Right ventricle myocardium inferior (tissue), 1 donor: ENCODE measurements at regions of chr16 and their contacts with region 1.

Region 1: GRCh38 chr16:15643048-15643945 is at the start of gene MARF1:
- DNase-seq: peak; percentile 100
- ATAC-seq: peak; percentile 98
- total RNA-seq, gene MARF1: 48.4 TPM

Region 2: DNA sequence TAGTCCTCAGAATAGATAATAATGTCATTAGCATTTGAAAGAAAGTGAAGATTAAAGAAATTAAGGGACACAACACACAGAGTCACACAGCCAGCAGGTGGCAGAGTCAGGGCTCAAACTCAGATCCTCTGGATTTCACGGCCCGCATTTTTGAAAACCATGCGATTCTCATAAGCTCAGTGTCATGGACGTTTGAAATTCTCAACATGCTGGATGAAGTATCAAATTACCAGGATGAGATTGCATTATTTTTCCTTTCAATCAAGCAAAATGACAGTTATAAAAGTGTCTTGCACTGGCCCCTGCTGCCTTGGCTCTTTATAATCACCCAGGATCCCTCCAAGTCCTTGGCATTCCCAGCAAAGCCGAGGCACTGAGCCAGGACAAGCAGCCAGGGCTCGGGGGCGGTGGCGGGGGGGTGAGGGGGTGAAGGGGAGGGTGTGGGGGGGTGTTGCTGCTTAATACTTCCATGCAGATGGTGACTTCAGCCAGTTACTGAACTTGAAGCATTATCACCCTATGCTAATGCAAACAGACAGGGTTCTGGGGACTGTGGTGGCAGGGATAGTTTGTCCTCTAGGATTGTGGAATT is 215.6 kb before region 1 on chr16:
- intact Hi-C with region 1: loop called (anchors 5 kb)
- DNase-seq: peak; percentile 83
- ATAC-seq: peak; percentile 86

Region 3: GRCh38 chr16:15607700-15608396 is 35.4 kb before region 1 on chr16:
- intact Hi-C with region 1: loop called (anchors 2 kb)
- DNase-seq: peak; percentile 78
- ATAC-seq: peak; percentile 98

Region 4: GRCh38 chr16:15672514-15673167 is 29.3 kb after region 1 on chr16:
- intact Hi-C with region 1: loop called (anchors 5 kb)
- DNase-seq: peak; percentile 95
- ATAC-seq: peak; percentile 99

Region 5: GRCh38 chr16:15704545-15704987 is 61.3 kb after region 1 on chr16:
- intact Hi-C with region 1: loop called (anchors 2 kb)
- DNase-seq: peak; percentile 79
- ATAC-seq: peak; percentile 81

Region 6: GRCh38 chr16:15829460-15829859 is 186.2 kb after region 1 on chr16:
- intact Hi-C with region 1: no loop called
- DNase-seq: peak; percentile 80
- ATAC-seq: peak; percentile 85